Psoas muscle (tissue), 8 donors: ENCODE measurements at regions of chr7 and their contacts with region 1.

Region 1: GRCh38 chr7:76020031-76020714 is 25.8 kb upstream of the TMEM120A start:
- DNase-seq: peak; percentile 83 to 89
- ATAC-seq: peak; percentile 78 to 97 (median 90)
- H3K4me3 ChIP-seq: no peak overlapping the region
- H3K27ac ChIP-seq: no peak overlapping the region
- H3K4me1 ChIP-seq: no peaks in the 10 kb centered on the region
- H3K27me3 ChIP-seq: no peaks in the 10 kb centered on the region
- CTCF ChIP-seq: peak; percentile 91

Region 2: GRCh38 chr7:75534727-75535307 is 485.4 kb before region 1 on chr7:
- intact Hi-C with region 1: loop called in 1 of 2 experiments (anchors 10 kb)
- DNase-seq: no peak
- ATAC-seq: no peak
- H3K4me3 ChIP-seq: no peak overlapping the region
- H3K27ac ChIP-seq: no peak overlapping the region
- H3K4me1 ChIP-seq: peaks cover 13% of the 10 kb centered on the region
- H3K27me3 ChIP-seq: no peaks in the 10 kb centered on the region
- CTCF ChIP-seq: no peak

Region 3: DNA sequence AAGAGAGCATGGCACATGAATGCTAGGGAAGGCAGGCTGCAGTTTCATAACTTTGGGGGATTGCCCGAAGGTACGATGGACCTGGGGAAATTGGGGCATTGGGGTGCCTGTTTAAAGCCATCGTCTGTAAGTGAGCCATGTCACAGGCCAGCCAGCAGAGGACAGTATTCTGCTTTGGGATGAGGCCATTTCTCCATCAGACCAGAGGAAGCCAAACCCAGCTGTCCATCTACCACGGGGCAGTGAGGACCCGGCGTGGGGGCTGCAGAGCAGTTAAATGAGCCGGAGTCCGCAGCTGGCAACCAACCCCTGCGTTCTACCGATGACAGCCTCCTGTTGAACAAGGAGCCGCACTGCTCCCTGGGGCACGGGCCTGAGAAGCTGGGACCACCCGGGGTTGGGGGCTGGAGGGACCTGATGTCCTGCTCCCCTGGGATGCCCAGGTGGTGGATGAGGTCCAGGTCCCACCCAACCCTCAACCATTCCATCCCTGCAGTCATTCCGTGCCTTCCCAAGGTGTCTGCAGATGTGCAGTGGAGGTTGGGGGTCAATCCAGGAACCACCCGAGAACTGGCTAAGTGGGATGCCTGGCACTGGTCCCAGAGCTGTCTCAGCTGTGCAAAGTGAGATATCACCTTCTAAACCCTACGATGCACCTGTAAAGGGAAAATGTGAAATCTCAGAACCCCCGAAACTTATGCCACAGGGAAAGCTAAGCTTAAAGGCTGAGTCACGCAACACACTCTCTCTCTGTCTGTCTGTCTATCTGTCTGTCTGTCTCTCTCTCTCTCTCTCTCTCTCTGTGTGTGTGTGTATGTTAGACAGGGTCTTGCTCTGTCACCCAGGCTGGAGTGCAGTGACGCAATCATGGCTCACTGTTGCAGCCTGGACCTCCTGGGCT is 153.4 kb before region 1 on chr7:
- intact Hi-C with region 1: loop called (anchors 1 to 2 kb)
- DNase-seq: peak in 1 of 2 donors; percentile 68
- ATAC-seq: peak; percentile 83 to 97 (median 93)
- H3K4me3 ChIP-seq: no peak overlapping the region
- H3K27ac ChIP-seq: no peak overlapping the region
- H3K4me1 ChIP-seq: peaks cover 7% of the 10 kb centered on the region
- H3K27me3 ChIP-seq: no peaks in the 10 kb centered on the region
- CTCF ChIP-seq: peak; percentile 84